Activated T-helper 2 cell treated with anti-CD3 and anti-CD28 coated beads, Interferon-gamma antibody, Interleukin-2, Interleukin-4, amounts not matched to agents 10 μg/mL and 5 μg/mL and 100 μg/mL, durations not matched to agents 14 hours and 24 hours and 36 hours (primary cell): ENCODE measurements at regions of chr13 and their contacts with region 1.

Region 1: DNA sequence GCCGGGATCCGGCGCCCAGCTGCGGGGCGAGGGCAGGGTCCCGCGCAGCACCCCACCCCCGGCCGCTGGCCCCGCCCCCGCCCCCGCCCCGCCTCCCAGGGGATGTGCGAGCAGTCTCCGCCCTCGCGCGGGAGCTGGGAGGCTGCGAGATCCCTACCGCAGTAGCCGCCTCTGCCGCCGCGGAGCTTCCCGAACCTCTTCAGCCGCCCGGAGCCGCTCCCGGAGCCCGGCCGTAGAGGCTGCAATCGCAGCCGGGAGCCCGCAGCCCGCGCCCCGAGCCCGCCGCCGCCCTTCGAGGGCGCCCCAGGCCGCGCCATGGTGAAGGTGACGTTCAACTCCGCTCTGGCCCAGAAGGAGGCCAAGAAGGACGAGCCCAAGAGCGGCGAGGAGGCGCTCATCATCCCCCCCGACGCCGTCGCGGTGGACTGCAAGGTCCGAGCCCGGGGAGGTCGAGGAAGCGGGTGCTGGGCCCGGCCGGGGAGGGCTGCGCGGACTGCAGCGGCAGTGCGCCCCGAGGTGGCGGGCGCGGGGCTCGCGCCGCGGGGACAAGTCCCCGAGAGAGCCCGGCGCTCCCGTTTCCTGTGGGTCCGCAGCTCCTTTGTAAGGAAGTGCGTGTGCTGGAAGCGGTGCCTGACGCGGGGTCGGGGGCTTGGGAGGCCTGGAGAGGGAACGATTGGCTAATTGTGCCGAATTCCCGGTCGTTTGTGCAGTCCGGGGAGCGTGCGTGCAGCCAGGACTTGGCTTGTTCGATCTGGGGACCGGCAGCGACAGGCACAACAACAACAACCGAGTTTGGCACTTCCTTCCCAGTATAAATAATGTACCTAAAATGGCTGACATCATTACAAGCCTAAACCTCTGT is at the start of gene ITM2B:
- DNase-seq: peak; percentile 50
- H3K4me3 Mint-ChIP-seq: peak within 1 kb of the TSS; percentile 87
- H3K27ac Mint-ChIP-seq: peak within 1 kb of the TSS; percentile 73
- H3K4me1 Mint-ChIP-seq: peaks cover 38% of the 10 kb centered on the region
- H3K27me3 Mint-ChIP-seq: peaks cover 44% of the 10 kb centered on the region
- total RNA-seq, gene ITM2B: 48.7 and 54.4 TPM in 2 replicates

Region 2: GRCh38 chr13:46850214-46850613 is 1383.1 kb before region 1 on chr13:
- intact Hi-C with region 1: no loop called
- DNase-seq: no peak
- H3K4me3 Mint-ChIP-seq: no peak overlapping the region
- H3K27ac Mint-ChIP-seq: no peak overlapping the region
- H3K4me1 Mint-ChIP-seq: peaks cover 7% of the 10 kb centered on the region
- H3K27me3 Mint-ChIP-seq: peaks cover 14% of the 10 kb centered on the region

Region 3: GRCh38 chr13:48043789-48044503 is 189.3 kb before region 1 on chr13:
- intact Hi-C with region 1: loop called (anchors 5 kb)
- DNase-seq: no peak
- H3K4me3 Mint-ChIP-seq: peak overlapping the region; percentile 57
- H3K27ac Mint-ChIP-seq: peak overlapping the region; percentile 87
- H3K4me1 Mint-ChIP-seq: peaks cover 36% of the 10 kb centered on the region
- H3K27me3 Mint-ChIP-seq: no peaks in the 10 kb centered on the region

Region 4: DNA sequence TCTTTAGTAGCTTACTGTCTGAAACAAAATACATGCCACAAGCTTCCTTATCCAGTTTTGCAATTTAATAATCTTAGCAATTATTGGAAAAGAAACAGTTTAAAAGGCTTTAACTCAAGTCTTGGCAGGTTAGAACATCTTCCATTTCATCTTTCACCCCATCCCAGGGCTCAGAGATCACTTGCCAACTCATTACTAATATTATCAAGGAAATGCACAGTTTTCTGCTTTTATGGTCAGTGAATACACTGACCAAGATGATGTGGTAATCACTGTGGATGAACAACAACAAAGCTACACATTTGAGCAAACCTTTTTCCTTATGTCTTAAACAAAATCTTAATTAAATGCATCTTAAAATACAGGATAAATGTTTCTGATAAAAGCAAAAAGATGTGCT is 48.3 kb before region 1 on chr13:
- intact Hi-C with region 1: loop called (anchors 2 kb)
- DNase-seq: no peak
- H3K4me3 Mint-ChIP-seq: no peak overlapping the region
- H3K27ac Mint-ChIP-seq: no peak overlapping the region
- H3K4me1 Mint-ChIP-seq: peaks cover 22% of the 10 kb centered on the region
- H3K27me3 Mint-ChIP-seq: peaks cover 24% of the 10 kb centered on the region

Region 5: DNA sequence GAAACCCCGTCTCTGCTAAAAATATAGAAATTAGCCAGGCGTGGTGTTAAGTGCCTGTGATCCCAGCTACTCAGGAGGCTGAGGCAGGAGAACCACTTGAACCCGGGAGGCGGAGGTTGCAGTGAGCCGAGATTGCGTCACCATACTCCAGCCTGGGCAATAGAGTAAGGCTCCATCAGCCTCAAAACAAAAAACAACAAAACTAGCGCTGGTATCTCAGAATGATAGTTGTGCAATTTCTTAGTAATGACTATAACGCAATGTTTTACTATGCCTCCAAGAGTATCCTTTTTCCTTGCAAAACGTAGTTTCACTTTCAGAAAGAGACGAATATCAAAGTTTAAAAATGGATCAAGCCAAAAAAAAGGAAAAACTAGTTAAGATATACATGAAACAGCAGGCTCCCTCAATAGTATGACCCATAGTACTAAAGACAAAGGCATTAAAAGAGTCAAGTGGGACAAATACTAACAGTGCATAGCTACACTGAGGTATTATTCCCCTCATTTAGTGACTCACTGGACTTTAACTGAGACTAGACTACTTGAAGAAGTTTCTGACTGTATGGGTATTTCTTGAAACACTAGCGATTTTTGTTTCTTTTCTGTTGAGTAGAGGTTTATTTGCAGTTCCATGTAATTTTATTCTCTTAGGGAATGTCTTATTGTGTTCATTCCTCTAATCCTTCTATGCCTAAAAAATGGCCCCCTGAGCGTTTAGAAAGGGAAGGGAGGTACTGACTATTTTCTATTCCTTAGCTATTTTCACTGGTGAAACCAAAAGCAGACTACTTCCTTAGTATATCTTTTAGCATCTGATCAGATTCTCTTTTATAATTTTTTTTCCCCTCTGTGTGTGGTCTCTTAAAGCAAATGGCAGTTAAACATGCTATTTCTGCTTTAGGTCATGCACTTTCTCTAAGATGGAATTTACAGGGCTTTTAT is 10.6 kb before region 1 on chr13:
- intact Hi-C with region 1: loop called (anchors 2 kb)
- DNase-seq: no peak
- H3K4me3 Mint-ChIP-seq: no peak overlapping the region
- H3K27ac Mint-ChIP-seq: no peak overlapping the region
- H3K4me1 Mint-ChIP-seq: peaks cover 35% of the 10 kb centered on the region
- H3K27me3 Mint-ChIP-seq: peaks cover 45% of the 10 kb centered on the region

Region 6: GRCh38 chr13:48562296-48563066 is 329.2 kb after region 1 on chr13:
- intact Hi-C with region 1: loop called (anchors 5 kb)
- DNase-seq: peak; percentile 78
- H3K4me3 Mint-ChIP-seq: peak overlapping the region; percentile 46
- H3K27ac Mint-ChIP-seq: peak overlapping the region; percentile 36
- H3K4me1 Mint-ChIP-seq: peaks cover 57% of the 10 kb centered on the region
- H3K27me3 Mint-ChIP-seq: peaks cover 46% of the 10 kb centered on the region